HCT116 (cell line): ENCODE measurements at regions of chr2 and their contacts with region 1.

Region 1: DNA sequence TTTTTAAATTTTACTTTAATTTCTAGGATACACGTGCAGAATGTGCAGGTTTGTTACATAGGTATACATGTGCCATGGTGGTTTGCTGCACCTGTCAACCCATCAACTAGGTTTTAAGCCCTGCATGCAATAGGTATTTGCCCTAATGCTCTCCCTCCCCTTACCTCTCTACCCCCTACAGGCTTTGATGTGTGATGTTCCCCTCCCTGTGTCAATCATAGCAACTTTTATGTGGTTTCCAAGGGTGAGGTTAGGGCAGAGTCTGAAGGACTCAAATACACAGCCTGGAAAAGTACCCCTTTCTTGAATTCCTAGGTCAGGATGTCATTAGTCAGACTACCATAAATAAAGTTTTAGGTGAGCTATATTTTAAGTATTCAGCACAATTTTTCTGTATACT is 31.1 kb upstream of the MYT1L start:
- DNase-seq: no peak
- ATAC-seq: no peak
- H3K4me3 ChIP-seq: no peak overlapping the region
- H3K27ac ChIP-seq: no peak overlapping the region
- H3K4me1 ChIP-seq: no peaks in the 10 kb centered on the region
- H3K27me3 ChIP-seq: no peaks in the 10 kb centered on the region
- CTCF ChIP-seq: no peak
- POLR2A ChIP-seq: no peak
- RAD21 ChIP-seq: no peak

Region 2: DNA sequence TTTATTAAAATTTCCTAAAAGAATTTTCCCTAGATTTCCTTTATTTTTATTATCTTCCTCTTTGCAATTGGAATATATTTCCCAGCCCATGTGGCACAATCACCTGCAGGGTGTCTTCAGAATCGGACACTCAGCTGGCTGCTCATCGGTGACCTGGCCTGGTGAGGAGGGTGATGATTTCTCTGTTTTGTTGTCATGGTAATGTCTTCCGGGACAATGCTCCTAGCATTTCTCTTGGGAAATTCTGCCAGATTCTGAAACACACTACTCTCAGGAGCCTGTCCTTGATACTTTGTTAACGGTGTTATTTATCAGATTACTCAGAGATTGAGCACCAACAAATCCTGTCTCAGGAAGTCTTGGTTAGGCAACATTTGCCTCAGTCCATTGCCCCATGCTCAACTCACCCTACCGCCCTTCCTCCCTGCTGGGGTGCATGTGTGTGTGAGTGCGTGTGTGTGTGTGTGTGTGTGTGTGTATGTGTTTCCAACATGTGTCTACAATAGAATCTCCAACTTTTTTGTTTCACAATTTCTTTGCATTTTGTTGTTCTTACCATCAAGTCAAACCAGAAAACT is 101.4 kb before region 1 on chr2:
- CTCF ChIA-PET with region 1: no interaction called
- POLR2A ChIA-PET with region 1: no interaction called
- RAD21 ChIA-PET with region 1: no interaction called
- intact Hi-C with region 1: no loop called
- DNase-seq: no peak
- ATAC-seq: no peak
- H3K4me3 ChIP-seq: no peak overlapping the region
- H3K27ac ChIP-seq: no peak overlapping the region
- H3K4me1 ChIP-seq: no peaks in the 10 kb centered on the region
- H3K27me3 ChIP-seq: no peaks in the 10 kb centered on the region
- CTCF ChIP-seq: no peak
- POLR2A ChIP-seq: no peak
- RAD21 ChIP-seq: no peak

Region 3: DNA sequence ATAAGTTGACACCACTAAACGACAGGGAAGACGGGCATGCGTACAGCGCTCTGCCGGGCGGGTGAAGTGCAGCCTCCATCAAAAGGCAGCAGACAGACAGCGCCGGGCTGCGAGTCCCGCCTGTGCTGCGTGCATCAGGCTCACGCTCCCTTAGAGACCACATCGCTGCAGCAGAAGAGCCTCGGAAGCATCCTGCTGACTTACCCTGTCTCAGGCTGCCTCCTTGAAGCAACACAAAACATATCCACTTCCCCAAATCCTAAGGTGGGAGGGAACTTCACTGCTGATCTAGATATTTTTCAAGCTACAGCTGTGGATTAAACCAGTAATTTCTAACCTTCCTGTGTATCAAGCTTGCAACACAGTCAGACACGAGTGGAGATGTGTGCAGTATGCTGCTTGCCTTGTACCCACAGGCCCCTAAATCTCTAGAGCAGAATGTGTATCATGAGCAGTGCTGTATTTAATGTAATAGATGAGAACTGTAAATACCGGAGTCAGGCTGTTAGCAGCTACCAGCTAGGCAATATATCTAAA is 37.5 kb before region 1 on chr2:
- CTCF ChIA-PET with region 1: no interaction called
- POLR2A ChIA-PET with region 1: no interaction called
- RAD21 ChIA-PET with region 1: no interaction called
- intact Hi-C with region 1: loop called (anchors 1 kb)
- DNase-seq: no peak
- ATAC-seq: no peak
- H3K4me3 ChIP-seq: no peak overlapping the region
- H3K27ac ChIP-seq: no peak overlapping the region
- H3K4me1 ChIP-seq: no peaks in the 10 kb centered on the region
- H3K27me3 ChIP-seq: no peaks in the 10 kb centered on the region
- CTCF ChIP-seq: no peak
- POLR2A ChIP-seq: no peak
- RAD21 ChIP-seq: no peak